HepG2 (cell line): ENCODE measurements at regions of chr15 and their contacts with region 1.

Region 1: DNA sequence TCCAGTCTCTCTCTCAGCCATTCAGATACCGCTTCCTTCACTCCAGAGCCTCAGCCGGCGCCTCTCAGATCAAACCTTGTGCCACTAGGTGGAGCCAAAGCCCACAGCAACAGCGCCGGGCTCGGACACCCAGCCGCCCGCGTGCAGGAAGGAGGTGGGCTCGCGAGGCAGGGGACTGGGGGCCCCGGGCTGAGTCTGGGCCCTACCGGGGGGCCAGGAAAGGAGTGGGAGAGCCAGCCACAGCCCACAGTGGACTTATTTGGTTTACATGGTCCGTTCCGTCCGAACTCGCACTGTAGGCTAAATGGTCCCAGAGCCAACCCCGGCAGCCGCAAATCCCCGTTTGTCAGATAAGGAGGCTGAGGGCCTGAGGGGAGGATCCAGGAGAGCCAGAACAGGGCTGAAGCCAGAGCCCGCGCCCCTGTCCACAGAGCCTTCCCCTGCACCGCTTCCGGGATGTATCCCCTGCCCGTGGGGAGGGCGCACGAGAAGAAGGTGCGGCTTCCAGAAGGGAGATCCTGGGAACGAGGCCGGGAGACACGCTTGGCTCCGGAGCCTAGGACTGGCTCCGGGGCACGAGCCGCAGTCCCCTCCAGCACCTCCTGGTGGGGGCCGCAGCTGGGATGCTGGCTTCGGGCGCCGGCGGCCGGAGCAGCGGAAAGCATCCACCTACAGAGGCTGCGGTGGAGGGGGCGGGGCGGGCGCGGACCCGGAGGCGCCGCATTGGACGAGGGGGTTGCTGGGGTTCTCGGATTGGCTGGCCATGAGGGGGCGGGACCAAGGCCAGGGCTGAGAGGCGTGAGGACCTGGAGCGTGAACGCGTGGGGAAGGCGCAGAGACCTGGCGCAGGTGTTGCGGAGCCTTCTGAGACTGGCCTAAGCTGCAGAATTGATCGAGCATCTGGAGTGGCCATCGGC is 6.5 kb upstream of the CYP11A1 start:
- DNase-seq: peak; percentile 83
- ATAC-seq: peak; percentile 96
- H3K4me3 ChIP-seq: peak overlapping the region; percentile 62 to 77 (median 66)
- H3K27ac ChIP-seq: no peak overlapping the region
- H3K4me1 ChIP-seq: peaks cover 32% of the 10 kb centered on the region
- H3K27me3 ChIP-seq: peaks cover 0 to 32% of the 10 kb centered on the region in 2 experiments; a peak in 4 of 5 replicates
- CTCF ChIP-seq: peak; percentile 97
- EP300 ChIP-seq: no peak
- POLR2A ChIP-seq: no peak
- RAD21 ChIP-seq: peak; percentile 94

Region 2: GRCh38 chr15:74361381-74361780 is 12.6 kb before region 1 on chr15:
- CTCF ChIA-PET with region 1: no interaction called
- POLR2A ChIA-PET with region 1: no interaction called
- in situ Hi-C with region 1: no loop called
- intact Hi-C with region 1: no loop called
- DNase-seq: no peak
- ATAC-seq: no peak
- H3K4me3 ChIP-seq: no peak overlapping the region
- H3K27ac ChIP-seq: no peak overlapping the region
- H3K4me1 ChIP-seq: peaks cover 18% of the 10 kb centered on the region
- H3K27me3 ChIP-seq: peaks cover 3 to 13% of the 10 kb centered on the region in 2 experiments
- CTCF ChIP-seq: no peak
- EP300 ChIP-seq: no peak
- POLR2A ChIP-seq: no peak
- RAD21 ChIP-seq: no peak

Region 3: GRCh38 chr15:74489518-74490338 is 115.7 kb after region 1 on chr15:
- CTCF ChIA-PET with region 1: interaction called, 41 read pairs
- POLR2A ChIA-PET with region 1: no interaction called
- in situ Hi-C with region 1: no loop called
- intact Hi-C with region 1: loop called (anchors 1 kb)
- DNase-seq: peak; percentile 39
- ATAC-seq: peak; percentile 83
- H3K4me3 ChIP-seq: no peak overlapping the region
- H3K27ac ChIP-seq: no peak overlapping the region
- H3K4me1 ChIP-seq: no peaks in the 10 kb centered on the region
- H3K27me3 ChIP-seq: no peaks in the 10 kb centered on the region
- CTCF ChIP-seq: peak; percentile 81
- EP300 ChIP-seq: no peak
- POLR2A ChIP-seq: no peak
- RAD21 ChIP-seq: peak; percentile 64; the same call in 1 of the 2 replicates

Region 4: GRCh38 chr15:74615508-74616365 is 241.7 kb after region 1 on chr15 and contains the start of gene CLK3:
- CTCF ChIA-PET with region 1: interaction called, 15 read pairs
- POLR2A ChIA-PET with region 1: no interaction called
- in situ Hi-C with region 1: loop called (anchors 5 kb)
- intact Hi-C with region 1: loop called (anchors 5 kb)
- DNase-seq: peak; percentile 85
- ATAC-seq: peak; percentile 87
- H3K4me3 ChIP-seq: peak within 1 kb of the TSS; percentile 90 to 100 (median 94)
- H3K27ac ChIP-seq: peak within 1 kb of the TSS; percentile 93
- H3K4me1 ChIP-seq: peaks cover 39% of the 10 kb centered on the region
- H3K27me3 ChIP-seq: peaks cover 0 to 20% of the 10 kb centered on the region in 2 experiments; a peak in 2 of 5 replicates
- CTCF ChIP-seq: peak; percentile 12; the same call in 1 of the 2 replicates
- EP300 ChIP-seq: peak; percentile 9 to 51; a peak in 2 of 4 replicates
- POLR2A ChIP-seq: no peak; a peak in 1 of 4 replicates
- RAD21 ChIP-seq: peak; percentile 58
- total RNA-seq, gene CLK3: 31.4 and 41.5 TPM in 2 replicates

Region 5: GRCh38 chr15:74620636-74621545 is 246.9 kb after region 1 on chr15:
- CTCF ChIA-PET with region 1: interaction called, 15 read pairs
- POLR2A ChIA-PET with region 1: no interaction called
- in situ Hi-C with region 1: loop called (anchors 5 kb)
- intact Hi-C with region 1: loop called (anchors 5 kb)
- DNase-seq: peak; percentile 79
- ATAC-seq: peak; percentile 79
- H3K4me3 ChIP-seq: no peak overlapping the region
- H3K27ac ChIP-seq: no peak overlapping the region
- H3K4me1 ChIP-seq: peaks cover 28% of the 10 kb centered on the region
- H3K27me3 ChIP-seq: no peaks in the 10 kb centered on the region; a peak in 1 of 5 replicates
- CTCF ChIP-seq: peak; percentile 92
- EP300 ChIP-seq: no peak
- POLR2A ChIP-seq: no peak
- RAD21 ChIP-seq: peak; percentile 87

Region 6: GRCh38 chr15:74635228-74635627 is 261.2 kb after region 1 on chr15:
- CTCF ChIA-PET with region 1: interaction called, 22 read pairs
- POLR2A ChIA-PET with region 1: no interaction called
- in situ Hi-C with region 1: no loop called
- intact Hi-C with region 1: loop called (anchors 1 kb)
- DNase-seq: peak; percentile 60
- ATAC-seq: peak; percentile 48
- H3K4me3 ChIP-seq: no peak overlapping the region
- H3K27ac ChIP-seq: no peak overlapping the region
- H3K4me1 ChIP-seq: peaks cover 20% of the 10 kb centered on the region
- H3K27me3 ChIP-seq: no peaks in the 10 kb centered on the region
- CTCF ChIP-seq: peak; percentile 95
- EP300 ChIP-seq: no peak
- POLR2A ChIP-seq: no peak
- RAD21 ChIP-seq: peak; percentile 88